Gastrocnemius medialis (tissue), 4 donors: ENCODE measurements at regions of chr1 and their contacts with region 1.

Region 1: DNA sequence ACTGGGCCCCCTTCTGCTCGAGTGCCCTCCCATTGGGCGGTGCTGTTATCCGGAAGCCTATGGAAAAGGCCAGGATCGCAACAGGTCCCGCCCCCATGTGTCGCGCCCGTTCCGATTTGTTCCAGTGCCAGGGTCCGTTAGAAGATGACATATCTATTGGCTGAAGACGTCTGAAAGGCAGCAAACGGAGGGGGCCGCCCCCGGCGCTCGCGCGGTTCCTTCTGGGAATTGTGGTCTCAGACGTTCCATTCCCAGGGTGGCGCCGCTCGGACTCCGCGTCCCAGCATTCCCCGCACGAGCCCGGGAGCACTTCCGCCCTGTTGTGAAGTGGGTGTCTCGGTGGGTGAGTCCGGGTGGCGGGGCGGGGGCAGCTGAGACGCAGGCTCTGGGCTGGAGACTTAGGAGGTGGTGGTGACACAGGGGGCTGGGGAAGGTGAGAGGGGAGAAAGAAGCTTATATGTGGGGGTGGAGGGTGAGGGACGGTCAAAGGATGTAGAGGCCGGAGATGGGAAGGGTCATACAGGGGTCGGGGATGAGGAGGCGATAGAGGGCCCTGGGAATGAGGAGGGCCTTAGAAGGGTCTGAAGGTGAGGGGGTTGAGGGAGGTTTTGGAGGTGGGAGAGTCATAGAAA is at the start of gene ZSCAN20:
- DNase-seq: peak; percentile 96 to 98
- ATAC-seq: peak; percentile 94 to 95
- H3K4me3 ChIP-seq: peak within 1 kb of the TSS; percentile 63 to 75 (median 72)
- H3K27ac ChIP-seq: peak within 1 kb of the TSS; percentile 80 to 88 (median 85)
- H3K4me1 ChIP-seq: peaks cover 16 to 35% of the 10 kb centered on the region in 2 donors
- H3K27me3 ChIP-seq: no peaks in the 10 kb centered on the region
- CTCF ChIP-seq: no peak
- POLR2A ChIP-seq: peak; percentile 19 to 31
- total RNA-seq, gene ZSCAN20: 2.7 to 7.0 (median 4.2) TPM

Region 2: DNA sequence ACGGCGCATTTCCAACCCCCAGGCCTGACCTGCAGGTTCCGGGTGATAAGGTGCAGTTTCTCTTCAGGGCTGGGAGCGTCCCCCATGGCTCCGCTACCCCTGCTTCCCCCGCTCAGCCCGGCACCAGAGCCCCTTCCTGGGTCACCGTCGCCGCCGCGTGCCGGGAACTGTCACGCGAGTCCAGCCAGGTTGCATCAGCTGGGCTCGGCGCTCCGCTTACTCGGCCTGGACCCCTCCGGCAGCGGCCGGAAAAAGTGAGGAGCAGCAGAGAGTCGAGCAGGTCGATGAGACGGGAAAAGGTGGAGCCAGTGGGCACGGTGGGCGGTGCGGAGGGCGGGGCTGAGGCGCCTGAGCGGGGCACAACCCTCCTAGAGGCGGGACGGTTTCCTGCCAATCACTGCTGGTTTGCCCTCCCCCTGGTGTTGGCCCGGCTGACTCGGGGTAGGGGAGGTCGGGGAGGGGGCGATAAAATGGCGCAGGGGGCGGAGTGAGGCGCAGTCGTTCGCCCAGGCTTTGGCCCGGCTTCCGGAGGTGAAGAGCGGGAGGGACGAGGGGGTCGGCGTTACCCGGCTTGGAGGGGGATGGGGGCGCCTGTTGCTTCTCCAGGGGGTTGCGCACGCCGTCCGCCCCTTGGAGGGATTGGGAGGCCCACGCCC is 655.2 kb before region 1 on chr1 and contains the starts of genes S100PBP and YARS1:
- in situ Hi-C with region 1: no loop called
- intact Hi-C with region 1: loop called (anchors 5 kb)
- DNase-seq: peak; percentile 99
- ATAC-seq: peak; percentile 90 to 92
- H3K4me3 ChIP-seq: peak within 1 kb of the TSS; percentile 91 to 98 (median 93)
- H3K27ac ChIP-seq: peak within 1 kb of the TSS; percentile 95 to 99 (median 96)
- H3K4me1 ChIP-seq: peaks cover 45 to 47% of the 10 kb centered on the region in 2 donors
- H3K27me3 ChIP-seq: no peaks in the 10 kb centered on the region
- CTCF ChIP-seq: peak in 3 of 5 experiments; percentile 28 to 52 (median 39)
- POLR2A ChIP-seq: peak; percentile 97
- total RNA-seq, gene S100PBP: 4.9 to 11.5 (median 9.9) TPM
- total RNA-seq, gene YARS1: 37.8 to 59.4 (median 55.9) TPM

Region 3: GRCh38 chr1:33080885-33081553 is 391.4 kb before region 1 on chr1 and contains the start of gene AZIN2:
- in situ Hi-C with region 1: no loop called
- intact Hi-C with region 1: no loop called
- DNase-seq: peak; percentile 93 to 94
- ATAC-seq: peak; percentile 97 to 99
- H3K4me3 ChIP-seq: peak within 1 kb of the TSS; percentile 63 to 80 (median 68)
- H3K27ac ChIP-seq: peak within 1 kb of the TSS in 3 of 4 donors; percentile 36 to 66 (median 57)
- H3K4me1 ChIP-seq: peaks cover 13 to 18% of the 10 kb centered on the region in 2 donors
- H3K27me3 ChIP-seq: no peaks in the 10 kb centered on the region
- CTCF ChIP-seq: no peak
- POLR2A ChIP-seq: peak; percentile 57 to 88
- total RNA-seq, gene AZIN2: 0.52 to 3.1 (median 1.2) TPM

Region 4: GRCh38 chr1:33219881-33220661 is 252.4 kb before region 1 on chr1:
- in situ Hi-C with region 1: no loop called
- intact Hi-C with region 1: loop called (anchors 2 kb)
- DNase-seq: no peak
- ATAC-seq: no peak
- H3K4me3 ChIP-seq: no peak overlapping the region
- H3K27ac ChIP-seq: no peak overlapping the region
- H3K4me1 ChIP-seq: no peaks in the 10 kb centered on the region
- H3K27me3 ChIP-seq: no peaks in the 10 kb centered on the region
- CTCF ChIP-seq: no peak
- POLR2A ChIP-seq: no peak

Region 5: DNA sequence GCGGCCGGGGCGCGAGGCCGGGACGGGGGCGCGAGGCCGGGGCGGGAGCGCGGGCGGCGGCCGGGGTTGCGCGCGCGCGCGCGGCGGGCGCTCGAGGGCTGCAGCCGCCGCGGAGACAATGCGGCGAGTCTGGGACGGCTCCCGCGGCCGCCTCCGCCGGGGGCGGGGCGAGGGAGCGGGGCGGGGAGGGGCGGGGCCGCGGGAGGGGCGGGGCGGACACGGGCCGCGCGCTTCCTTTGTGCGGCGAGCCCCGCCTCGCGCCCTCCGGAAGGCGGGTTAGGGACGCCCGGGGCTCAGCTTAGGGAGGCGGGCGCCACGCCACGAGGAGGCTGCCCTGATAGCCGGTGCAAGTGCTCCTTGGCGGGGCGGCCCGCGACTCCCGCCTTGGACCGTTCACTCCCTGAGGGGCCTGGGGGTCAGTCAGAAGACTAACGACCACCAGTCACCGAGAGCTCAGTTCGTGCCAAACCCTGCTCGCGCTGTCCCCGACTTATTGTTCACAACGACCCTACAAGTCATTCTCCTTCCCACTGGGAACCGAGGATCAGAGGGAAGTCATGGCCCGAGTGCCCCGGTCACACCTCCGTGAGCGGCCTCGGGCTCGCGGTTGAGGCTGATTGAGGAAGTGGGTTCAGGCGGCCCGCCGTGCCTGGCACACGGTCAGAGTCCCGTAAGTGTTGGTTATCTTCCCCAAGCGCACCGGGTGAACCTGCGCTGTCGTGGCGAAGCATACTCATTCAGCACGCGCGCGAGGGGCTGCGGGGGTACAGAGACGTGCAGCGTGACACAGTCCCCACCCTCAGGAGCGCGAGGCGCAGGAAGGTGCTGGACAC is 122.5 kb before region 1 on chr1:
- in situ Hi-C with region 1: loop called in 2 of 4 experiments (anchors 25 kb)
- intact Hi-C with region 1: no loop called
- DNase-seq: peak; percentile 80 to 86
- ATAC-seq: peak; percentile 67 to 73
- H3K4me3 ChIP-seq: peak overlapping the region; percentile 66 to 83 (median 68)
- H3K27ac ChIP-seq: peak overlapping the region; percentile 90 to 99 (median 94)
- H3K4me1 ChIP-seq: peaks cover 22 to 28% of the 10 kb centered on the region in 2 donors
- H3K27me3 ChIP-seq: no peaks in the 10 kb centered on the region
- CTCF ChIP-seq: peak in 1 of 5 experiments; percentile 8
- POLR2A ChIP-seq: peak; percentile 91 to 94

Region 6: DNA sequence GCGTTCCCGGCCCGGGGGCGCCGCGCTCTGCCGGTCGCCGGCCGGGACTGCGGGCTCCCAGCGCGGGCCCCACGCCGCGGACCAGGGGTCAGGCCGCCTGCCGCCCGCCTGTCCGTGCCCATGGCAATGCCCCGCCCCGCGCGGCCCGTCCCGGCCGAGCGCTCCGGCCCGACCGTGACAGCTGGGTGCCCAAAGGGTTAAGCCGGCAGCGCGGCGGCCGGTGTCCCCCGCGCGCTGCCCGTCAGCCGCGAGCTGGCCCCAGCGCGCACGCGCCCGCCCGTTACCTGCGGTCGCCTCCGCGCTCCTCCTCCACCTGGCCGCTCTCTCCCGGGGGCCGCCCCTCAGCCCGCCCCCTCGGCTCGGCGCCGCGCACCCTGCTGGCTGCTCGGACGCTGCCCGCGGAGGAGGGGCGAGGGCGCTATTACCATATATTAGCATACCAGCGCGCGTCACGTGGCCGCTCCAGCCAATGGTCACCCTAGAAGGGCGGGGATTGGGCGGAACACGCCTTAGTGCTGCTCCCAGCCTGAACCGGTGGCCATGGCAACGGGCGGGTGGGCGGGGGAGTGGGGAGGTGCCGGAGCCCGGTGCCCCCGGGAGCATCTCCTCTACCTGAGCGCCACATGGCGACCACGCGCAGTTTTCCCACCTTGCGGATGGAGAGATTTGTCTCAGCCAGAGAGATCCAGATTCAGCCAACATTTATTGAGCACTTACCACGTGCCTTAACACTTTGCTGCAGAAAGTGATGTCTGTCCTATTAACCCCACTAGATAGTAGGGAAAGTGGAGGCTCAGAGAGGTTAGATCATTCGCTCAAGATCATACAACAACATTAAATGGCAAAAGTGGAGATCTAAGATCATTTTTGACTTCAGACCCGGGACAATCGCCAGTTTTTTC is 41.5 kb before region 1 on chr1 and contains the start of gene PHC2:
- in situ Hi-C with region 1: no loop called
- intact Hi-C with region 1: loop called (anchors 2 kb)
- DNase-seq: peak; percentile 96
- ATAC-seq: peak; percentile 88
- H3K4me3 ChIP-seq: peak within 1 kb of the TSS; percentile 58 to 75 (median 66)
- H3K27ac ChIP-seq: peak within 1 kb of the TSS; percentile 75 to 87 (median 86)
- H3K4me1 ChIP-seq: peaks cover 35 to 37% of the 10 kb centered on the region in 2 donors
- H3K27me3 ChIP-seq: no peaks in the 10 kb centered on the region
- CTCF ChIP-seq: peak; percentile 5 to 46 (median 31)
- POLR2A ChIP-seq: peak; percentile 78 to 85
- total RNA-seq, gene PHC2: 318 to 516 (median 364) TPM

Region 7: DNA sequence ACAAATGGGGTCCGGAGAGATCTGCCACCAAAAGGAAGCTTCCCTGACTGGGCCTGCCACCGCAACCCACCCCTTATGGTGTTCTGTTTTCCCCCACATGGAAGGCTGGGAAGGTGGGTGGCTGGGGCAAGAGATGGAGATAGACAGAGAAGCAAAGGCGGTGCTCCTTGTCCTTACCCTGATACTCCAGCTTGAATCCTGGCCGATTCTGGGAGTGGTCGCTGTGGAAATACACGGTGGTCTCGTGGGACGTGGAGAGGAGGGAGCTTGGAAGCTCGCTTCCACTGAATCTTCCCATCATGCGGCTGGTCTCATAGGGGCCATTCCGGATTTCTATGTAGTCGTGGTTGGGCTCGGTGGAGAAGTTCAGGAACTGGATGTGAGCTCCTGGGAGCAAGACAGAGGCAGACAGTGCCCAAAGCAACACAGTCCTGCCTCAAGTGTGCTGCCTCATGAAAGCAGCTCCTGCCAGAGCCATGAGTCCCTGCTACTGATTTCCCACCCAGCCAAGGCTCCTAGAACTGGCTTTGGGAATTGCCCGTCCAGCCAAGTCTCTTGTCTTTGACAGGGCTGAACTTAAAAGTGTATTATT is 138.5 kb after region 1 on chr1:
- in situ Hi-C with region 1: no loop called
- intact Hi-C with region 1: loop called (anchors 5 kb)
- DNase-seq: no peak
- ATAC-seq: no peak
- H3K4me3 ChIP-seq: no peak overlapping the region
- H3K27ac ChIP-seq: no peak overlapping the region
- H3K4me1 ChIP-seq: no peaks in the 10 kb centered on the region
- H3K27me3 ChIP-seq: peaks cover 0 to 6% (median 0%) of the 10 kb centered on the region in 3 donors
- CTCF ChIP-seq: no peak
- POLR2A ChIP-seq: no peak

Region 8: DNA sequence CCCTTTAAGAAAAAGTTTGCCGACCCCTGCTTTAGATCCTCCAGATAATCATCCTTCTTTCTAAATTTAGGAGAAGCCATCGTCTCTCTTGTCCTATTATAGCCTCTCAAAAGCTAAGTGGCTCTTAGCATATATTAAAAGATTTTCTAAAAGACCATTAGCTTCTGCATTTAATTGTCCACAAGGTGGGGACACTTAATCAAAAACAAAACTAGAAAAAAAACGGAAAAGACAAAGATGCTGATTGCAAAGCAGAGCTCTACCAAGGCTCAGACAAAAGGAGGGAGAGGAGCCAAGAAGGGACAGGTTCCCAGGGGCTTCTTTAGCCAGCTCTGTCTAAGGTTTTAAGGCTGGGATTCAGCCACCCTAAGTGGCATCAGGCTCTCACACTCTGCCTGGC is 263.2 kb after region 1 on chr1:
- in situ Hi-C with region 1: no loop called
- intact Hi-C with region 1: no loop called
- DNase-seq: no peak
- ATAC-seq: no peak
- H3K4me3 ChIP-seq: no peak overlapping the region
- H3K27ac ChIP-seq: no peak overlapping the region
- H3K4me1 ChIP-seq: no peaks in the 10 kb centered on the region
- H3K27me3 ChIP-seq: no peaks in the 10 kb centered on the region
- CTCF ChIP-seq: no peak
- POLR2A ChIP-seq: no peak

Region 9: DNA sequence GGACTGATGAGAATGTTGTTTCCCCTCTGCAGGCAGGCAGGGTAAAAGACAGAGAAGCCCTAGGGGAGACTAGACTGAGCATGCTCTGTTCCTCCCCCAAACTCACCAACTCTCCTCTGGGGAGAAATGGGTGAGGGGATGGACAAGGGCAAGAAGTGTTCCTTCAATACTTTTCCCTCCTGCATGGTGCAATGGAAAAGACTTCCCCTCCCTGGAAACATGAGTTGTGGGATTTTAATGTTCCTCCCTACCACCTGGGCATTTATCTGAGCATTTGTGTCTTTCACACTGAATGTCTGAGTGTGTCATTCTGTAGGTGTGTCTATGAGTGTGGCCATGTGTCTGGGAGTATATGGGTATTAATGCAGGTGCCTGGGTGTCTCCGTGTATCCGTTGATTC is 980.0 kb after region 1 on chr1:
- in situ Hi-C with region 1: no loop called
- intact Hi-C with region 1: no loop called
- DNase-seq: no peak
- ATAC-seq: no peak
- H3K4me3 ChIP-seq: no peak overlapping the region
- H3K27ac ChIP-seq: no peak overlapping the region
- H3K4me1 ChIP-seq: no peaks in the 10 kb centered on the region
- H3K27me3 ChIP-seq: no peaks in the 10 kb centered on the region
- CTCF ChIP-seq: no peak
- POLR2A ChIP-seq: no peak